ENCODE measurements at regions of chr12 and their contacts with region 1.

Region 1: DNA sequence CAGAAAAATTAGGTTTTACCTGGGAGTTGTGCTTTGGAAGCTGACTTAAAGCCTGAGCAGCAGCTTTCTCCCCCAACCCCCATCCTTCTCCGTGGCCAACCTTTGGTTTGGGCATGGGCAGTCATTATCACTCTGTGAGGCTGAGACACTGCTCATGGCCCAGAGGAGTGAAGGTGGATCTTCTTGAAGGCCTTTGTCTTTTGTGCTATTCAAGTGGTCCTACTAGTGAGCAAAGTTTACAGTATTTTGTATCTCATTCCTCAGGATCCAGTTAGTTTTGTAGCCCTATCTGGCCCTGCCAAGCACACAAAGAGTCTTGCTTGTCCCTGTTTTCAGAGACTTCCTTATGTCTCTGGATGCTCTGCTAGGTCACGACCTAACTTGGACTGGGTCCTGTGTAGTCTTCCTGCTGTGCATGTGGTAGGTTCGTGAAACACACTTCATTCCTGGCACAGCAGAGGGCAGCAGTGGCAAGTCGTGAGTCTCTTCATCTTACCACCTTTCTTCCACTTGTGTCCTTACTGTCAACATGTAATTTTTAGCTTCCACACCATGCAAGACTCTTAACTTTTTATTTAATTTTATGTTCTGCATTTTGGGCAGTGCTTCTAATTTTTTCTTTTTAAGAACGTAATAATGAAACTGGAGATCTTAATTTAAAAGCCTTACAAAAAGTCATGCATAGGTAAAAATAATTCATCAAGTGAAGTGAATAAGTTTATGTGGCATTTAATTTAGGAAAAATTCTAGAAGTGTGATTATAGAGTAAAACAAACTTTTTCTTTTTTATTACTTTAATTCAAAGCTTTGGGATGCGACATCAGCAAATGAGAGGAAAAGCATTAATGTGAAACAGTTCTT is 53.7 kb downstream of the APAF1 start:
- DNase-seq: peak; percentile 38
- ATAC-seq: peak; percentile 99
- H3K4me3 ChIP-seq: no peak overlapping the region
- H3K27ac ChIP-seq: no peak overlapping the region
- H3K4me1 ChIP-seq: no peaks in the 10 kb centered on the region
- H3K27me3 ChIP-seq: no peaks in the 10 kb centered on the region
- CTCF ChIP-seq: peak; percentile 71 to 77 (median 75)
- EP300 ChIP-seq: no peak
- POLR2A ChIP-seq: no peak
- RAD21 ChIP-seq: peak; percentile 68

Region 2: GRCh38 chr12:98388126-98388525 is 310.7 kb before region 1 on chr12:
- CTCF ChIA-PET with region 1: no interaction called
- POLR2A ChIA-PET with region 1: no interaction called
- RAD21 ChIA-PET with region 1: no interaction called
- SMC1A ChIA-PET with region 1: no interaction called
- in situ Hi-C with region 1: no loop called
- intact Hi-C with region 1: no loop called
- DNase-seq: no peak
- ATAC-seq: no peak
- H3K4me3 ChIP-seq: no peak overlapping the region
- H3K27ac ChIP-seq: no peak overlapping the region
- H3K4me1 ChIP-seq: no peaks in the 10 kb centered on the region
- H3K27me3 ChIP-seq: peaks cover 0 to 3% of the 10 kb centered on the region in 2 experiments; a peak in 1 of 4 replicates
- CTCF ChIP-seq: no peak
- EP300 ChIP-seq: no peak
- POLR2A ChIP-seq: no peak
- RAD21 ChIP-seq: no peak

Region 3: DNA sequence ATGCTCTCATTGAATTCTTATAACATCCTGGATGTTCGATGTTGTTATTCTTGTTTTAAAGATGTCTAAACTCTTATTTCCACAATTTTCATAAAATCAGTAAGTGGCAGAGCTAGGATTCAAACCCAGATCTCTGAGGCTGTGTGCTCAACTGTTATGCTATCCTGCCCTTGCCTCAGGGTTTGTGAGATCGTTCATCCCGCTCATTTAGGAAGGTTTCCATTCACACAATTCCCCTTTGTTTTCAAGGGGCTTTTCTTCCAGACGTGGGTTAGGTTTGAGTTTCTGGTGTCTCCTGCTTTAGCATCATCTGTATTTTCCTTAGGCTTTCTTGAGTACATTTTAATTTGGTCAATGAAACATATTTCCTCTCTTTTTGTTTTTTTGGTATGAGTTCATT is 15.6 kb after region 1 on chr12:
- CTCF ChIA-PET with region 1: interaction called, 17 read pairs
- POLR2A ChIA-PET with region 1: no interaction called
- RAD21 ChIA-PET with region 1: interaction called, 3 read pairs
- SMC1A ChIA-PET with region 1: interaction called, 5 read pairs
- in situ Hi-C with region 1: no loop called
- intact Hi-C with region 1: no loop called
- DNase-seq: no peak
- ATAC-seq: no peak
- H3K4me3 ChIP-seq: no peak overlapping the region
- H3K27ac ChIP-seq: no peak overlapping the region
- H3K4me1 ChIP-seq: no peaks in the 10 kb centered on the region
- H3K27me3 ChIP-seq: no peaks in the 10 kb centered on the region
- CTCF ChIP-seq: no peak
- EP300 ChIP-seq: no peak
- POLR2A ChIP-seq: no peak
- RAD21 ChIP-seq: no peak

Region 4: GRCh38 chr12:98939350-98939749 is 240.5 kb after region 1 on chr12:
- CTCF ChIA-PET with region 1: interaction called, 5 read pairs
- POLR2A ChIA-PET with region 1: no interaction called
- RAD21 ChIA-PET with region 1: interaction called, 3 read pairs
- SMC1A ChIA-PET with region 1: no interaction called
- in situ Hi-C with region 1: no loop called
- intact Hi-C with region 1: loop called (anchors 2 kb)
- DNase-seq: no peak
- ATAC-seq: peak; percentile 59
- H3K4me3 ChIP-seq: no peak overlapping the region
- H3K27ac ChIP-seq: no peak overlapping the region
- H3K4me1 ChIP-seq: no peaks in the 10 kb centered on the region
- H3K27me3 ChIP-seq: no peaks in the 10 kb centered on the region
- CTCF ChIP-seq: peak; percentile 27 to 45 (median 39); a peak in 3 of 6 replicates
- EP300 ChIP-seq: no peak
- POLR2A ChIP-seq: no peak
- RAD21 ChIP-seq: peak; percentile 31; the same call in 1 of the 2 replicates

Measured in GM12878 (cell line).